SK-N-SH (cell line): ENCODE measurements at regions of chr6 and their contacts with region 1.

Region 1: GRCh38 chr6:16128759-16129622 is at the start of gene MYLIP:
- DNase-seq: peak; percentile 99
- H3K4me3 ChIP-seq: peak within 1 kb of the TSS; percentile 67 to 89
- H3K27ac ChIP-seq: peak within 1 kb of the TSS in 1 of 2 experiments; percentile 74; a peak in 1 of 4 replicates
- H3K4me1 ChIP-seq: peaks cover 23 to 27% of the 10 kb centered on the region in 2 experiments; a peak in 3 of 4 replicates
- H3K27me3 ChIP-seq: peaks cover 15% of the 10 kb centered on the region
- CTCF ChIP-seq: peak; percentile 51
- EP300 ChIP-seq: peak in 1 of 2 experiments; percentile 30; a peak in 1 of 4 replicates
- RAD21 ChIP-seq: peak; percentile 71
- polyA plus RNA-seq, gene MYLIP: 3.1 and 3.8 TPM in 2 replicates

Region 2: GRCh38 chr6:15879382-15880261 is 249.4 kb before region 1 on chr6:
- CTCF ChIA-PET with region 1: interaction called, 10 read pairs
- POLR2A ChIA-PET with region 1: interaction called, 13 read pairs
- DNase-seq: peak; percentile 76
- H3K4me3 ChIP-seq: no peak overlapping the region
- H3K27ac ChIP-seq: peak overlapping the region in 1 of 2 experiments; percentile 84; a peak in 2 of 4 replicates
- H3K4me1 ChIP-seq: peaks cover 4 to 33% of the 10 kb centered on the region in 2 experiments; a peak in 3 of 4 replicates
- H3K27me3 ChIP-seq: no peaks in the 10 kb centered on the region
- CTCF ChIP-seq: no peak
- EP300 ChIP-seq: peak in 1 of 2 experiments; percentile 96; a peak in 2 of 4 replicates
- RAD21 ChIP-seq: peak; percentile 28; the same call in 1 of the 2 replicates

Region 3: DNA sequence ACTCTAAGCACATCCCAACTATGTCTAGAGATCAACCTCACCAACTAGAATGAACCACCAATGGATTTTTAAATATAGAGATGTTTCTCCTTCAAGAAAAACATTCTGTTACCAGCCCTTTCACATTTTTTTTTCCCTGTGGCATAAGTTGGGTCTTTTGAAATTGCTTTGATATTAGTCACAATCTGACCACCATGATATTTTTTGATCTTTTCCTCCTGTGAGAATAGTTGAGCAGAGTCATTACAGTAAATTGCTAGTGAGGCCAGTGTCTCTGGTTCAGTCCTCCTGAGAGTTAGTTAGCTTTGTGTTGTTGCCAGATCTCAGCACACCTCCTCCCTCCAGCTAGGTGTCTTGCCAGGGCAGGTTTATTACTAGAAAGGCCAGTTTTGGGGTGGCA is 79.8 kb before region 1 on chr6:
- CTCF ChIA-PET with region 1: no interaction called
- POLR2A ChIA-PET with region 1: no interaction called
- DNase-seq: no peak
- H3K4me3 ChIP-seq: no peak overlapping the region
- H3K27ac ChIP-seq: no peak overlapping the region
- H3K4me1 ChIP-seq: no peaks in the 10 kb centered on the region
- H3K27me3 ChIP-seq: no peaks in the 10 kb centered on the region
- CTCF ChIP-seq: no peak
- EP300 ChIP-seq: no peak
- RAD21 ChIP-seq: no peak

Region 4: DNA sequence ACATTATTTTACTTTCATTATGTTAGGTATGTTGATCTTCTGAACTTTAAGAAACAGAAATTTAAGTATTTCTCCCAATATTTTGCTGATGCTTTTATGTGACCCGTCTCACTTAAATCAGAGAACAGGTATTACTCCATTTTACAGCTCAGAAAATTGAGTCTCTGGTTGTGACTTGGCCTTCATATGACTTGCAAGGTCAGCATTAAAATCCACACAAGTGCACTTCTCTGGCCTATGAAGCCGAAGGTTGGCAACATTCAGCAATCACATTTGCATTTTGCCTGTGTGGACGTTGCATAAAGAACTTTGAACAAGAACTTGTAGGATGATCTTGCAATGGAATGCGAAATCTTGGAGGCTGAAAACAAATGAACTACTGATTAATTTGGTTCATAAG is 10.2 kb before region 1 on chr6:
- CTCF ChIA-PET with region 1: interaction called, 29 read pairs
- POLR2A ChIA-PET with region 1: interaction called, 3 read pairs
- DNase-seq: no peak
- H3K4me3 ChIP-seq: no peak overlapping the region
- H3K27ac ChIP-seq: no peak overlapping the region
- H3K4me1 ChIP-seq: no peaks in the 10 kb centered on the region; a peak in 1 of 4 replicates
- H3K27me3 ChIP-seq: no peaks in the 10 kb centered on the region; the same call in 1 of the 2 replicates
- CTCF ChIP-seq: no peak
- EP300 ChIP-seq: no peak
- RAD21 ChIP-seq: no peak

Region 5: DNA sequence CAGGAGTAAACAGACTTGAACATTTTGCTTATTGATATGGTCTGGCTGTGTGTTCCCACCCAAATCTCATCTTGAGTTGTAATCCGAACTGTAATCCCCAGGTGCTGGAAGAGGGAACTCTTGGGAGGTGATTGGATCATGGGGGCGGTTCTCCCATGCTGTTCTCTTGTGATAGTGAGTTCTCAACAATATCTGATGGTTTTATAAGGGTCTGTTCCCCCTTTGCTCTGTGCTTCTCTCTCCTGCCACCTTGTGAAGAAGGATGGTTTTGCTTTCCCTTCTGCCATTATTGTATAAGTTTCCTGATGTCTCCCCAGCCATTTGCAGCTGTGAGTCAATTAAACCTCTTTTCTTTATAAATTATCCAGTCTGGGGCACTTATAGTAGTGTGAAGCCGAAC is 39.9 kb after region 1 on chr6:
- CTCF ChIA-PET with region 1: interaction called, 13 read pairs
- POLR2A ChIA-PET with region 1: interaction called, 5 read pairs
- DNase-seq: no peak
- H3K4me3 ChIP-seq: no peak overlapping the region; a peak in 1 of 4 replicates
- H3K27ac ChIP-seq: no peak overlapping the region
- H3K4me1 ChIP-seq: no peaks in the 10 kb centered on the region; a peak in 1 of 4 replicates
- H3K27me3 ChIP-seq: no peaks in the 10 kb centered on the region
- CTCF ChIP-seq: peak; percentile 57
- EP300 ChIP-seq: no peak
- RAD21 ChIP-seq: peak; percentile 86

Region 6: GRCh38 chr6:16206595-16207037 is 77.6 kb after region 1 on chr6:
- CTCF ChIA-PET with region 1: interaction called, 10 read pairs
- POLR2A ChIA-PET with region 1: no interaction called
- DNase-seq: peak; percentile 80
- H3K4me3 ChIP-seq: peak overlapping the region in 1 of 2 experiments; percentile 33; a peak in 1 of 4 replicates
- H3K27ac ChIP-seq: peak overlapping the region; percentile 36 to 47; a peak in 3 of 4 replicates
- H3K4me1 ChIP-seq: peaks cover 4 to 11% of the 10 kb centered on the region in 2 experiments; a peak in 3 of 4 replicates
- H3K27me3 ChIP-seq: no peaks in the 10 kb centered on the region
- CTCF ChIP-seq: peak; percentile 97
- EP300 ChIP-seq: no peak
- RAD21 ChIP-seq: peak; percentile 98